ENCODE measurements at regions of chr2 and their contacts with region 1.

Region 1: GRCh38 chr2:112242384-112242783 is 12.5 kb downstream of the ZC3H8 start:
- DNase-seq: no peak
- H3K4me3 ChIP-seq: no peak overlapping the region
- CTCF ChIP-seq: no peak

Region 2: DNA sequence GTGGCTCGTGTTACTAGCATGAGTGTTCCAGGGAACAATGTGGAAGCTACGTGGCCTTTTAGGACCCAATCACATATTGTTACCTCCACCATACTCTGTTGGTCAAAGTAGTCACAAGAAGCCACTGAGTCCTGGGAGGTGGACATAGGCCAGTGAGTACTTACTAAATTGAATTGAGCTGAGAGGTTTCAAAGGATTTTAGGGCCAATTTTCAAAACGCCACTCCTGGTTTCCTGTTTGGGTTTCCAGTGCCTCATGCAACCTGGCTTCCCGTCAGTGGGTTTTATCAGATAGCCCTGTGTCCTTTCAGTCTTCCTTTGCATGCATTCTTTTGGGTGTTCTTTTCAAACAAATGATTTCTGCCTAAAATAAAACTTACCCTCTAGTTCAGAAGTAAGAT is 47.9 kb before region 1 on chr2:
- in situ Hi-C with region 1: loop called (anchors 5 kb)
- DNase-seq: no peak
- H3K4me3 ChIP-seq: no peak overlapping the region
- CTCF ChIP-seq: no peak

Measured in astrocyte of the cerebellum (primary cell).